ENCODE measurements at regions of chr11 and their contacts with region 1.

Region 1: GRCh38 chr11:94493281-94494125 is at the starts of genes ANKRD49 and MRE11:
- DNase-seq: peak; percentile 98
- H3K4me3 ChIP-seq: peak within 1 kb of the TSS; percentile 82 to 94 (median 88)
- H3K27ac ChIP-seq: peak within 1 kb of the TSS; percentile 85 to 92 (median 90)
- H3K4me1 ChIP-seq: peaks cover 14 to 27% (median 18%) of the 10 kb centered on the region in 4 donors
- H3K27me3 ChIP-seq: no peaks in the 10 kb centered on the region
- CTCF ChIP-seq: peak in 2 of 5 experiments; percentile 22 to 23
- EP300 ChIP-seq: no peak
- POLR2A ChIP-seq: peak; percentile 78
- total RNA-seq, gene ANKRD49: 24.4 to 43.6 (median 33.2) TPM
- total RNA-seq, gene MRE11: 5.6 to 17.0 (median 9.9) TPM

Region 2: GRCh38 chr11:93741094-93741881 is 752.2 kb before region 1 on chr11 and contains the starts of genes C11orf54 and TAF1D:
- in situ Hi-C with region 1: loop called in 2 of 4 experiments (anchors 25 kb)
- intact Hi-C with region 1: no loop called
- DNase-seq: peak; percentile 98
- H3K4me3 ChIP-seq: peak within 1 kb of the TSS; percentile 67 to 80 (median 69)
- H3K27ac ChIP-seq: peak within 1 kb of the TSS; percentile 93 to 98 (median 94)
- H3K4me1 ChIP-seq: peaks cover 21 to 76% (median 47%) of the 10 kb centered on the region in 4 donors
- H3K27me3 ChIP-seq: no peaks in the 10 kb centered on the region
- CTCF ChIP-seq: peak in 3 of 5 experiments; percentile 15 to 60 (median 55)
- EP300 ChIP-seq: no peak
- POLR2A ChIP-seq: peak; percentile 97
- total RNA-seq, gene C11orf54: 33.3 to 160 (median 105) TPM
- total RNA-seq, gene TAF1D: 105 to 444 (median 166) TPM

Region 3: GRCh38 chr11:93784152-93784934 is 709.2 kb before region 1 on chr11 and contains the start of gene MED17:
- in situ Hi-C with region 1: loop called in 1 of 4 experiments (anchors 25 kb)
- intact Hi-C with region 1: no loop called
- DNase-seq: peak; percentile 94
- H3K4me3 ChIP-seq: peak within 1 kb of the TSS; percentile 70 to 77 (median 73)
- H3K27ac ChIP-seq: peak within 1 kb of the TSS; percentile 92 to 98 (median 96)
- H3K4me1 ChIP-seq: peaks cover 19 to 33% (median 30%) of the 10 kb centered on the region in 4 donors
- H3K27me3 ChIP-seq: no peaks in the 10 kb centered on the region
- CTCF ChIP-seq: peak; percentile 37 to 60 (median 46)
- EP300 ChIP-seq: no peak
- POLR2A ChIP-seq: peak; percentile 84
- total RNA-seq, gene MED17: 17.1 to 29.1 (median 25.1) TPM

Region 4: GRCh38 chr11:94171693-94172440 is 321.6 kb before region 1 on chr11:
- in situ Hi-C with region 1: loop called in 1 of 4 experiments (anchors 25 kb)
- intact Hi-C with region 1: no loop called
- DNase-seq: peak; percentile 34
- H3K4me3 ChIP-seq: no peak overlapping the region
- H3K27ac ChIP-seq: no peak overlapping the region
- H3K4me1 ChIP-seq: peaks cover 0 to 15% (median 7%) of the 10 kb centered on the region in 4 donors
- H3K27me3 ChIP-seq: no peaks in the 10 kb centered on the region
- CTCF ChIP-seq: peak; percentile 43 to 71 (median 61)
- EP300 ChIP-seq: no peak
- POLR2A ChIP-seq: no peak

Region 5: DNA sequence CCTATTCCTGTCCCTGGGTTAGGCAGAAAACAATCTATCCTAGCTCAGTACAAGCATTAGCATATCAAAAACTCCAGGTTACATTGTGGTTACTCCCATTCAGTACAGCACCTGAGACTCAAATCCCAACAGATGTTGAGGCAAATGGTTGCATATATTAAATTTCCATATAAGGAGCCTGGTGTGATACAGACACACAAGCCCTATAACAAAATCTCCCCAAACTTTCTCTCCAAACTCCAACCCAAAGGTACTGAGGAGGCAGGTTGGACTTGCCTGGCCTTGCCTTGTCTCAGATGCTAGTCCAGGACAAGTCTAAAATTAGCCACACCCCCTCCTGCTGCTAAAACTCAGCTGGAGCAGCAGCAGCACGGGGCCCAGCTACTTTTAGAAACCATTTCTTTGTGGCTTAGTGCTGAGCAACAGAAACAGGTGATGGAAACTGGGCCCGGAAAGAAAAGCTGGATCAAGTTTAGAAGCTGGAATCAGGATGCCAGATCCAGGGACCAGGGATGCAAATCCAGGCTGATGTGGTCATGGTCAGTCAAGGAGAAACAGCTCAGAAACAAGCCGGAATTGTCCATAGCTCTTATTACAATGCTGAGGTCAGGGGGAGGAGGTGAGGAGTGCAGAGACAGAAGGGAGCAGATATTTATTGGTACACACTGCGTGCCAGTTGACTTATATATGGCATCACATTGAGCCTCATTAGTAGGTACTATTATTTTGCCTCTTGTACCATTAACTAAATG is 201.0 kb after region 1 on chr11:
- in situ Hi-C with region 1: no loop called
- intact Hi-C with region 1: no loop called
- DNase-seq: no peak
- H3K4me3 ChIP-seq: no peak overlapping the region
- H3K27ac ChIP-seq: no peak overlapping the region
- H3K4me1 ChIP-seq: no peaks in the 10 kb centered on the region
- H3K27me3 ChIP-seq: peaks cover 81% of the 10 kb centered on the region
- CTCF ChIP-seq: no peak
- EP300 ChIP-seq: no peak
- POLR2A ChIP-seq: no peak

Region 6: DNA sequence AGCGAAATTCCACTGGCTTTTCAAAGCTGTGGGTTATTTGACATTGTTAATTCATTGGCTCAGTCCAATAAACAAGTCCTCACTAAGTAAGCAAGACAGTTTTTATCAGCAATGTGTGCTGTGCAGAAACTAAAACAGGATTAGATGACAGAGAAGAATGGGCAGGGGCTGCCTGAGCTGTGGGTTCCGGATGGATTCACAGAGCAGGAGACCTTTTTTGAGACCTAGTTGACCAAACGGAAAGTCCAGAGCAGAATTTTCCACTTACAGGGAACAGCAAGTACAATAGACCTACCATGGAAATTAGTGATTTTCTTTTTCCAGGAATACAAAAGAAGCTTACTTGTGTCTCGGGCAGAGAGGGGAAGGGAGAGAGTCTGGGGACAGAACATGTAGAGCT is 550.5 kb after region 1 on chr11:
- in situ Hi-C with region 1: no loop called
- intact Hi-C with region 1: no loop called
- DNase-seq: no peak
- H3K4me3 ChIP-seq: no peak overlapping the region
- H3K27ac ChIP-seq: no peak overlapping the region
- H3K4me1 ChIP-seq: no peaks in the 10 kb centered on the region
- H3K27me3 ChIP-seq: peaks cover 15% of the 10 kb centered on the region
- CTCF ChIP-seq: no peak
- EP300 ChIP-seq: no peak
- POLR2A ChIP-seq: no peak

Region 7: DNA sequence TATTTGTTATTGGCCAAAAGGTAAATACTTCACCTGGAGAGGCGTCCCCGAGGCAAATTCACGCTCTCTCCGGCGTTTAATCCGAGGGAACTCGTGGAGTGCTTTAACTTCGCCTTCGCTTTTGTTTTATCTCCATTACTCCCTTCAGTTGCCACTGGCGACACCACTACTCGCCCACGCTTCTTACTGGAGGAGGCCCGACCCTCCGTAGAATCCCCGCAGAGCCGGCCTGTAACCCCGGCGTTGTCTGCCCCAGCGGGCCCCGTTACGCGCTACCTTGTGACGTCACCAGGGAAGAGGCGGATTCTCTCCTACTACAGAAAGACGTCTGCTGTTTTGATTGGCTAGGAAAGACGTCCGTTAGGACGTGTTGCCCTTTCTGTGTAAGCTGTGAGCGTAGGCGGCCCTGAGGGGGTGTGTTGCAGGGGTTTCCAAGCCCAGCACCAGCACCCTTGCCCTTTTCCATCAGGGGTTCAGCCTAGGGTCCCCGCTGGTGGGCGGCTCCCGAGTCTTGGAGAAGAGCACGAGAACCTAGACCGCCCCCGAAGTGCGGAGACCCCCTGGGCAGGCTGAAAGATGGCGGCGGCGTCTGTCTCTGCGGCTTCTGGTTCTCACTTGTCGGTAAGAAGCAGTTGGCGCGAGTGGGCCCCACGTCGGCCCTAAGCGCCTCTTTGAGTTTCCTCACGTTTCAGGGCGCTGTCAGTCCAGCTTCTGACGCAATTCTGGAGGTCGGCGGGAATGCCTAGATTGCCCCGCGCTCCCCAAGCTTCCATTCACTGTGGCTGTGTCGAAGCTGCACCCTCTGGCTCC is 1296.8 kb after region 1 on chr11 and contains the start of gene CEP57:
- in situ Hi-C with region 1: loop called in 1 of 4 experiments (anchors 25 kb)
- intact Hi-C with region 1: no loop called
- DNase-seq: peak; percentile 97
- H3K4me3 ChIP-seq: peak within 1 kb of the TSS; percentile 67 to 97 (median 92)
- H3K27ac ChIP-seq: peak within 1 kb of the TSS; percentile 92 to 99 (median 96)
- H3K4me1 ChIP-seq: peaks cover 14 to 30% (median 22%) of the 10 kb centered on the region in 4 donors
- H3K27me3 ChIP-seq: no peaks in the 10 kb centered on the region
- CTCF ChIP-seq: peak in 1 of 5 experiments; percentile 14
- EP300 ChIP-seq: no peak
- POLR2A ChIP-seq: peak; percentile 55
- total RNA-seq, gene CEP57: 22.4 to 61.7 (median 40.2) TPM

Measured in transverse colon (tissue), 4 donors.